HepG2 (cell line): ENCODE measurements at regions of chr13 and their contacts with region 1.

Region 1: GRCh38 chr13:52617070-52618060 is 24.9 kb upstream of the HNRNPA1L2 start:
- DNase-seq: peak; percentile 82
- ATAC-seq: peak; percentile 99
- H3K4me3 ChIP-seq: peak overlapping the region; percentile 81 to 100 (median 89)
- H3K27ac ChIP-seq: peak overlapping the region; percentile 54
- H3K4me1 ChIP-seq: peaks cover 12% of the 10 kb centered on the region
- H3K27me3 ChIP-seq: no peaks in the 10 kb centered on the region; a peak in 1 of 5 replicates
- CTCF ChIP-seq: no peak
- EP300 ChIP-seq: 0 out of 4 replicates have a peak, but pooled peaks have one; percentile 15 to 53
- POLR2A ChIP-seq: peak; percentile 86 to 87
- RAD21 ChIP-seq: peak; percentile 9; the same call in 1 of the 2 replicates

Region 2: DNA sequence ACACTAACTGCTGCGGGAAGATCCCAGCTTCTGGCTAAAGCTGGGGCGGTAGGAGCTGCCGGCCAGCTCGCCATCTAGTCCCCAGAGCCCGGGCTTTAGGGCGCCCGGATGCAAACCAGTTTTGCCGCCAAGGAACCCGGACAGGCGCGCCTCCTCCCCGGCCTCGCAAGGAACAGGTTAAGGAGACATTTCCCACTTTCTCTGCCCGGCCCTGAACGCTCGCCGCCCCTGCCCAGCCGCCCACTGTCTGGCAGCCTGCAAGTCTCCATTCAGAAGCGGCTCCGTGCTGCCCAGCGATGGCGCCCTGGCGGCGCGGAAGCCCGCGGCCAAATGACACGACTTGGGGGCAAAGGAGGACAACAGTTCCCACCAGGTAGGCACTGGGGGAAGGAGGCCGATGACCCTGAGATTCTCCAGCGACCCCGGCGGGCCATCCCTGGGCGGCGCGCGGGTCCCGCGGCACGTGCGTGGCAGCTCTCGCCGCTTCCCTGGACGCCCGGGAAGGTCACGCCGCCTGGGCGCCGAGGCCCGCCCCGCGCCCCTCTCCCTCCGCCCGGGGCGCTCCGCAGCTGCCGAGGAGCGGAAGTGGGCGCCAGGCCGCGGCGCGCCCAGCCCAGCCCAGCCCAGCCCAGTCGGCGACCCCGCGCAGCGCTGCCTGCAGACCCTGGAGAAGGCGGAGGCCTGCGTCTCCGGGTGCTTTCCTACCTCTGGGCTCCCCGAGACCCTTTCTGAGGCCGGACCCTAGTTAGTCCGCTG is 17.3 kb before region 1 on chr13:
- CTCF ChIA-PET with region 1: no interaction called
- POLR2A ChIA-PET with region 1: interaction called, 19 read pairs
- in situ Hi-C with region 1: no loop called
- intact Hi-C with region 1: no loop called
- DNase-seq: no peak
- ATAC-seq: peak; percentile 78
- H3K4me3 ChIP-seq: peak overlapping the region; percentile 64 to 69 (median 64); a peak in 5 of 6 replicates
- H3K27ac ChIP-seq: peak overlapping the region; percentile 82
- H3K4me1 ChIP-seq: peaks cover 40% of the 10 kb centered on the region
- H3K27me3 ChIP-seq: no peaks in the 10 kb centered on the region; a peak in 1 of 5 replicates
- CTCF ChIP-seq: peak; percentile 25; the same call in 1 of the 2 replicates
- EP300 ChIP-seq: no peak
- POLR2A ChIP-seq: peak; percentile 45 to 63
- RAD21 ChIP-seq: no peak; the same call in 1 of the 2 replicates

Region 3: GRCh38 chr13:52642131-52642530 is 24.8 kb after region 1 on chr13 and contains the start of gene HNRNPA1L2:
- CTCF ChIA-PET with region 1: no interaction called
- POLR2A ChIA-PET with region 1: no interaction called
- in situ Hi-C with region 1: no loop called
- intact Hi-C with region 1: no loop called
- DNase-seq: no peak
- ATAC-seq: no peak
- H3K4me3 ChIP-seq: no peak within 1 kb of the TSS
- H3K27ac ChIP-seq: no peak within 1 kb of the TSS
- H3K4me1 ChIP-seq: no peaks in the 10 kb centered on the region
- H3K27me3 ChIP-seq: no peaks in the 10 kb centered on the region
- CTCF ChIP-seq: no peak
- EP300 ChIP-seq: no peak
- POLR2A ChIP-seq: no peak
- RAD21 ChIP-seq: no peak
- total RNA-seq, gene HNRNPA1L2: 7.1 and 7.7 TPM in 2 replicates

Region 4: DNA sequence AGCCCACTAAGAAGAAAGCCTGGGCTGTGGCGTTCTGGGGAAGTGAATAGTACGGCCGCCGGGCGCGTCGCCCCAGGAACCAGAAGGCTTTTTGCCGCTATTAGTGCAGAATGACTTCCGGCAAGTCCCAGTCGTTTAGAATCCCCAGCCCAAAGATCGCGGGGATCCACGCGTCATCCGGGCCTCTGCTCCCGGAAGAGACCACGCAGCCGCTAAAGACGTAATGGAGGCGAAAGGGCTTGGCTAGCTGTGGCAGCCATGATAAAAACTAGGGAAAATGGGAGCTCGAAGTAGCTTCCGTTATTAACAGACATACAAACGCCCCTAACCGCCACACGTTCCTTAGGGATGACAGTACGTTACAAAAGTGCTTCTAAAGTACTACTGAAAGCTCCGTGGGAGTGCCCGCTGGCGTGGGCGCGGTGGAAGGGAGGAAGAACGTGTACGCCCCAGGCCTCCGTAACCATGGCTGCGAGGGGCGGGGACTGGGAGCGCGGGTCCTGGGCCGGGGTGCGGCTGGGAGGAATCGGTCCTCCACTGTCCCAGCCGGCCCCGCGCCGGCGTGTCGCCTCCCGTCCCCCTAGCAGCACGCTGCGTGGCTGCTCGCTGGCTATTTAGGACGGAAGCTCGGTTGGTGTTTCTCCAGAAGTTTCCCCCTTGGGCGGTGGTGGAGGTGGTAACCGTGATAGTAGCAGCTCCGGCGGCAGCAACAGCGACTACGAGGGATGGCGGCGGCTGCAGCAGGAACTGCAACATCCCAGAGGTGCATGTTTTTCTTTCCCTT is 35.0 kb after region 1 on chr13 and contains the start of gene SUGT1:
- CTCF ChIA-PET with region 1: no interaction called
- POLR2A ChIA-PET with region 1: interaction called, 94 read pairs
- in situ Hi-C with region 1: no loop called
- intact Hi-C with region 1: loop called (anchors 1 kb)
- DNase-seq: peak; percentile 94
- ATAC-seq: peak; percentile 98
- H3K4me3 ChIP-seq: peak within 1 kb of the TSS; percentile 90 to 95 (median 92)
- H3K27ac ChIP-seq: peak within 1 kb of the TSS; percentile 100
- H3K4me1 ChIP-seq: peaks cover 43% of the 10 kb centered on the region
- H3K27me3 ChIP-seq: no peaks in the 10 kb centered on the region; a peak in 1 of 5 replicates
- CTCF ChIP-seq: peak; percentile 70
- EP300 ChIP-seq: no peak
- POLR2A ChIP-seq: peak; percentile 91 to 93
- RAD21 ChIP-seq: no peak; the same call in 1 of the 2 replicates
- total RNA-seq, gene SUGT1: 71.2 and 113 TPM in 2 replicates

Region 5: GRCh38 chr13:52809310-52809769 is 192.0 kb after region 1 on chr13:
- CTCF ChIA-PET with region 1: no interaction called
- POLR2A ChIA-PET with region 1: no interaction called
- in situ Hi-C with region 1: loop called (anchors 10 kb)
- intact Hi-C with region 1: no loop called
- DNase-seq: peak; percentile 80
- ATAC-seq: peak; percentile 97
- H3K4me3 ChIP-seq: no peak overlapping the region
- H3K27ac ChIP-seq: no peak overlapping the region
- H3K4me1 ChIP-seq: peaks cover 7% of the 10 kb centered on the region; the same call in 1 of the 2 replicates
- H3K27me3 ChIP-seq: 0 out of 5 replicates have a peak, but pooled peaks cover 0 to 4% of the 10 kb centered on the region in 2 experiments
- CTCF ChIP-seq: peak; percentile 90
- EP300 ChIP-seq: no peak
- POLR2A ChIP-seq: no peak
- RAD21 ChIP-seq: peak; percentile 69

Region 6: GRCh38 chr13:53137779-53138178 is 520.4 kb after region 1 on chr13:
- CTCF ChIA-PET with region 1: no interaction called
- POLR2A ChIA-PET with region 1: no interaction called
- in situ Hi-C with region 1: loop called (anchors 25 kb)
- intact Hi-C with region 1: no loop called
- DNase-seq: no peak
- ATAC-seq: no peak
- H3K4me3 ChIP-seq: no peak overlapping the region
- H3K27ac ChIP-seq: no peak overlapping the region
- H3K4me1 ChIP-seq: peaks cover 13% of the 10 kb centered on the region; the same call in 1 of the 2 replicates
- H3K27me3 ChIP-seq: no peaks in the 10 kb centered on the region
- CTCF ChIP-seq: no peak
- EP300 ChIP-seq: no peak
- POLR2A ChIP-seq: no peak
- RAD21 ChIP-seq: no peak